BJ (cell line): ENCODE measurements at regions of chr11 and their contacts with region 1.

Region 1: DNA sequence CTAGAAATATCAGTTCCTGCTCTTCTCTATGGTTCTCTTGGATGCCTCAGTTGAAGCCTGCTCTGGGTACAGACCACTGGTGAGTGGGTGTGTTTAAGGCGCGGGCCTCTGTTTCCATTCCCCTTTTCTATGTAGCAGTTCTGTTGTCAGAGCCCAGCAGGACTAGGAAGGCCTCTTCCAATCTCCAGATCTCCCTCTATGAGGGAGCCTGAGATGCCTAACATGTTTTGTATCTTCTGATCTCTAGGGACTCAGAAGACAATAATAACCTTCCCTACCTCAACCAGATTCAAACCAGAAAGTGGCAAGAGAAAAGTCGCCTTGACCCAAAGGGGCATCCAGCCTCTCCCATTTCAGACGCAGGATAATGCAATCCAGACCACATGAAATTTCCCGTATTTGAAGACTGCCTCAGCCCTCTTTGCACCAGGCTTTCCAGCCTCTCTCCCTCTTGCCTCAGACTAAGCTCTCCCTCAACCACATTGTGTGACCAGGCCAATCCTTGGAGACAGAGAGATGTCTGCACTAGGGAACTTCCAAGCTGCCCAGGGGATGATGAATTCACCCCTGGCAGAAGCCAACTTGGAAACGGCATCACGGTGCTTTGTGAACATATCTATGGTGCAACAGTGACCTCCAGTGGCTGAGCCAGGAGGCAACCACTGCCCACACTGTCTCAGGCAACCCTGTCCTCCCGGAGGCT is 150.1 kb upstream of the UBASH3B start:
- DNase-seq: peak; percentile 82
- H3K4me3 ChIP-seq: no peak overlapping the region
- H3K27me3 ChIP-seq: no peaks in the 10 kb centered on the region
- CTCF ChIP-seq: peak; percentile 90

Region 2: DNA sequence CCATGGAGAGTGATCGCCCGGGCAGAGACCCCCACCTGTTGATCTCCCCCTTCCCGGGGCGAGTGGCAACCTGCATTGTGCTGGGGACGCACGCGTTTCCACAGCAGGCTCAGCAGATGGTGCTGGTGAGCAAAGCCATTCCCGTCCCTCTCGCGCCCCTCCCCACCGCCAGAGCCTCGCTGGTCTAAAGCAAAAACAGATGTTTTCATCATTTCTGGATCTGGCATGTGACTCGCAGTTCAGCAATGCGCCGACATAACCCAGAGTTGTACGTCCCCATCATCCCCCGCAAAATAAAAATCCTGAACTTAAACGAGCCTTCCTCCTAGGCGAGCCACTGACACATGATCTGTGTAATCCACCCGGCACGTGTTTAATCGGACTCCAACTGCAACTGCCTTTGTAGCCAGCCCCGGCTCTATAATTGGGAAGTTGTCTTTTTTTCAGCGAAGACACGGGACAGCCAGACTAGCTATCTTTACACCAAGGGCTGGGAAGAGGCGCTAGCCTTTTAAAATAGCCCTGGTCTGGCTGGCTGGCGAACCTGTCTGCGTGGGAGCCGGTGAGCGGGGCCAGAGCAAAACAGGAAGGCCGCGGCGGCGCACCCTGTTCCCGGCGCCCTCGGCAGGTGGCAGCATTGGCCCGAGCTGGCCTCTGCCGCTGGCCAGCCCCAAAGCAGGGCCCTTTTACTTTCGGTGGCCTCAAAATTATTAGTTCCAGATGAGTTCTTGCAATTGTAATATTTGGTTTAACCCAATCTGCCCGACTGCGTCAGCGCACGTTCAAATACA is 849.7 kb before region 1 on chr11:
- CTCF ChIA-PET with region 1: interaction called, 32 read pairs
- POLR2A ChIA-PET with region 1: no interaction called
- DNase-seq: peak; percentile 91
- H3K4me3 ChIP-seq: peak overlapping the region; percentile 45
- H3K27me3 ChIP-seq: no peaks in the 10 kb centered on the region
- CTCF ChIP-seq: peak; percentile 97

Region 3: GRCh38 chr11:122293296-122294023 is 212.0 kb before region 1 on chr11:
- CTCF ChIA-PET with region 1: interaction called, 24 read pairs
- POLR2A ChIA-PET with region 1: no interaction called
- DNase-seq: no peak
- H3K4me3 ChIP-seq: no peak overlapping the region
- H3K27me3 ChIP-seq: peaks cover 1% of the 10 kb centered on the region; the same call in 1 of the 2 replicates
- CTCF ChIP-seq: peak; percentile 52

Region 4: GRCh38 chr11:122394313-122394712 is 111.1 kb before region 1 on chr11:
- CTCF ChIA-PET with region 1: no interaction called
- POLR2A ChIA-PET with region 1: no interaction called
- DNase-seq: no peak
- H3K4me3 ChIP-seq: no peak overlapping the region
- H3K27me3 ChIP-seq: peaks cover 1% of the 10 kb centered on the region; the same call in 1 of the 2 replicates
- CTCF ChIP-seq: no peak

Region 5: DNA sequence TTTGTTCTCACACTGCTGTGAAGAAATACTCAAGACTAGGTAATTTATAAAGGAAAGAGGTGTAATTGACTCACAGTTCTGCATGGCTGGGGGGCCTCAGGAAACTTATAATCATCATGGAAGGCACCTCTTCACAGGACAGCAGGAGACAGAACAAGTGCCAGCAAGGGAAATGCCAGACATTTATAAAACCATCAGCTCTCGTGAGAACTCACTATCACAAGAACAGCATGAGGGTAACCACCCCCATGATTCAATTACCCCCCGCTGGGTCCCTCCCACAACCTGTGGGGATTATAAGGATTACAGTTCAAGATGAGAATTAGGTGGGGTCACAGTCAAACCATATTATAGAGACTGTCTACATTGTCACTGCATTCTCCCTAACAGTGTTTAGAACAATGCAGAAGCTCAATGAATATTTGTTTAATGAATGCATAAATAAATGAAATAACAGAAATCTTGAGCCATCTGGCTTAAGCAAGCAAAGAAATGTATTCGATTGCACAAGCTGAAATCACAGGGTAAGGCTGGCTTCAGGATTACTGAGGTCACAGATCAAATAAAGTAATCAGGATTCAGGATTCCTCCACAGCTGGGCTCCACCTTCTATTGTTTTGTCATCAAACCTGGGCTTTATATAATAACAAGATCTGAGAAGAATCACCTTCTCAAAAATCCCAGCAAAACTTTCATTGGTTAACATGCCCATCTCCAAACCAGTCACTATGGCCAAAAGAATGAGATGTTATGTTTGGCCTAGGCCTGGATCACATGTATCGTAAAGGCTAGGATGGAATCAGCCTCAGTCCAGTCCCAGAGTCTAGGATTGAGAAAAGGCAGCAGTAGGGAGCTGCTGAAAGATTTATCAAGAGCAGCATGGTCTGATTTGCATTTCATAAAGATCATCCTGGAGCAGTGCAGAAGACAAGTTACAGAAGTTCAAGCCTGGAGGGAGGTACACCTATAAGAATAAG is 12.2 kb after region 1 on chr11:
- CTCF ChIA-PET with region 1: interaction called, 12 read pairs
- POLR2A ChIA-PET with region 1: no interaction called
- DNase-seq: no peak
- H3K4me3 ChIP-seq: no peak overlapping the region
- H3K27me3 ChIP-seq: peaks cover 6% of the 10 kb centered on the region
- CTCF ChIP-seq: no peak